ENCODE measurements at regions of chr3 and their contacts with region 1.

Region 1: GRCh38 chr3:49295489-49296058 is 18.5 kb upstream of the C3orf62 start:
- DNase-seq: peak; percentile 35
- ATAC-seq: no peak
- H3K4me3 ChIP-seq: no peak overlapping the region
- H3K27ac ChIP-seq: no peak overlapping the region
- H3K4me1 ChIP-seq: no peaks in the 10 kb centered on the region
- H3K27me3 ChIP-seq: no peaks in the 10 kb centered on the region
- CTCF ChIP-seq: peak; percentile 55
- POLR2A ChIP-seq: no peak
- RAD21 ChIP-seq: peak; percentile 60

Region 2: GRCh38 chr3:49454458-49454857 is 158.9 kb after region 1 on chr3:
- CTCF ChIA-PET with region 1: no interaction called
- POLR2A ChIA-PET with region 1: no interaction called
- dilution Hi-C with region 1: no loop called
- in situ Hi-C with region 1: no loop called
- intact Hi-C with region 1: loop called (anchors 1 kb)
- DNase-seq: no peak
- ATAC-seq: no peak
- H3K4me3 ChIP-seq: no peak overlapping the region
- H3K27ac ChIP-seq: no peak overlapping the region
- H3K4me1 ChIP-seq: peaks cover 8% of the 10 kb centered on the region
- H3K27me3 ChIP-seq: no peaks in the 10 kb centered on the region
- CTCF ChIP-seq: no peak
- POLR2A ChIP-seq: no peak
- RAD21 ChIP-seq: no peak; the same call in 1 of the 2 replicates

Measured in IMR-90 (cell line).